Caco-2 (cell line): ENCODE measurements at regions of chr17 and their contacts with region 1.

Region 1: GRCh38 chr17:75077496-75078283 is 10.1 kb upstream of the SLC16A5 start:
- DNase-seq: peak; percentile 77 to 79
- H3K4me3 ChIP-seq: peak overlapping the region; percentile 54
- H3K4me3 Mint-ChIP-seq: peak overlapping the region; percentile 95
- H3K27ac Mint-ChIP-seq: peak overlapping the region; percentile 93
- H3K4me1 ChIP-seq: peaks cover 32% of the 10 kb centered on the region
- H3K4me1 Mint-ChIP-seq: peaks cover 22% of the 10 kb centered on the region
- H3K27me3 ChIP-seq: no peaks in the 10 kb centered on the region
- H3K27me3 Mint-ChIP-seq: no peaks in the 10 kb centered on the region
- CTCF ChIP-seq: peak in 1 of 2 experiments; percentile 55

Region 2: GRCh38 chr17:75096082-75096625 is 18.5 kb after region 1 on chr17:
- CTCF ChIA-PET with region 1: interaction called, 3 read pairs
- POLR2A ChIA-PET with region 1: interaction called, 9 read pairs
- intact Hi-C with region 1: loop called (anchors 2 kb)
- DNase-seq: peak; percentile 80 to 92
- H3K4me3 ChIP-seq: no peak overlapping the region
- H3K4me3 Mint-ChIP-seq: peak overlapping the region; percentile 36
- H3K27ac Mint-ChIP-seq: peak overlapping the region; percentile 95
- H3K4me1 ChIP-seq: peaks cover 50% of the 10 kb centered on the region
- H3K4me1 Mint-ChIP-seq: peaks cover 52% of the 10 kb centered on the region
- H3K27me3 ChIP-seq: no peaks in the 10 kb centered on the region
- H3K27me3 Mint-ChIP-seq: no peaks in the 10 kb centered on the region
- CTCF ChIP-seq: no peak